ENCODE measurements at regions of chr11 and their contacts with region 1.

Region 1: DNA sequence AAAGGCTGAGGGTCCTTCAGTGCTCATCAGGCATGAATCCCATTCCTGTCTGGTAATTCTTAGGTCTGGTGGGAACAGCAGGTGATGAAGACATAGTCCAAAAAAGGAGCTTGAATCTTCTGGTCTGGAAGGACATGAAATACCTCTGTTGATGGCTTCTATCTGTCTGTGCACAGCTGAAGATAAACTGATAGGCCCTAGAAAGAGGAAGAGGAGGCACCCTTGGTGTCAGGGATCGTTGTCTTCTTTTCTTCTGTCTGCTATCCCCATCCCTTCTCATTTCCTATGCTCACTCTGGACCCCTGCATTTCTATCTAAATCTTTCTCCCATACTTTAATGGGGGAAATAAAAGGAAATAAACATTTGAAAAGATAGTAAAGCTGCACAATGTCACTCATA is 9.4 kb downstream of the AGBL2 start:
- DNase-seq: no peak
- H3K27ac ChIP-seq: no peak overlapping the region
- CTCF ChIP-seq: no peak

Region 2: GRCh38 chr11:46979358-46979757 is 726.4 kb before region 1 on chr11:
- CTCF ChIA-PET with region 1: interaction called, 11 read pairs
- POLR2A ChIA-PET with region 1: no interaction called
- DNase-seq: no peak
- H3K27ac ChIP-seq: no peak overlapping the region
- CTCF ChIP-seq: no peak

Measured in RWPE1 (cell line).